ENCODE measurements at regions of chr16 and their contacts with region 1.

Region 1: GRCh38 chr16:84800158-84800978 is 19.4 kb upstream of the CRISPLD2 start:
- DNase-seq: no peak
- ATAC-seq: no peak

Region 2: GRCh38 chr16:84434800-84435199 is 365.6 kb before region 1 on chr16:
- intact Hi-C with region 1: no loop called
- DNase-seq: no peak
- ATAC-seq: no peak

Region 3: GRCh38 chr16:84841770-84842300 is 41.5 kb after region 1 on chr16:
- intact Hi-C with region 1: loop called (anchors 5 kb)
- DNase-seq: peak; percentile 67
- ATAC-seq: no peak

Measured in Right ventricle myocardium inferior (tissue), 1 donor.